IMR-90 (cell line): ENCODE measurements at regions of chr3 and their contacts with region 1.

Region 1: GRCh38 chr3:190205739-190206138 is 85.0 kb upstream of the P3H2 start:
- DNase-seq: peak; percentile 92
- ATAC-seq: peak; percentile 86
- H3K4me3 ChIP-seq: no peak overlapping the region
- H3K27ac ChIP-seq: no peak overlapping the region
- H3K4me1 ChIP-seq: no peaks in the 10 kb centered on the region
- H3K27me3 ChIP-seq: no peaks in the 10 kb centered on the region
- CTCF ChIP-seq: no peak
- POLR2A ChIP-seq: no peak
- RAD21 ChIP-seq: 0 out of 2 replicates have a peak, but pooled peaks have one; percentile 23

Region 2: DNA sequence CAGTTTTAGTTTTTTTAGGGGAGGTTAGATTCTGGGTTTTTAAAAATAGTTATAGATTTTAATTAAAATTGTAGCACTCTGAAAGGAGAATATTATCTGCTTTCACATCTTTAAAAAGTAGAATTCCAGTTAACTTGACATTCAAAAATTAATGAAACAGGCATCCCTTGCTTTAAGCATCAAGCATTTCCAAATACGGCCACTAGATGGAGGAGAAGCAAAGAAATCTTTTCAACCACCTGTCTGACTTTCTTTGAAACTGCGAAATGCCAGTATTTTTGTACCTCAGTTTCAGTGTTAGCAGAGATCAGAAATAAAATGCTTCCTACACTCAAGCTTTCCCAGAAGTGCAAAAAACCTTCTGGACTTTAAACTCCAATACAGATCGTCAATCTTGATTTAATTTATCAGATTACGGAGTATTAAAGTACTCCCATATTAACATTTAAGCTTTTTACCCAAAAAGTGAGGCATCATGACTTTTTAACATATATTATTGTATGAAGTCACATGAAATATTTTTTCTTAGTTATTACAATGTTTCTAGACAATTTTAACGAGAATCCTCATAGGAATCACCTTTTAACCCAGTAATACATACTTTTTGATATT is 238.4 kb before region 1 on chr3:
- CTCF ChIA-PET with region 1: interaction called, 5 read pairs
- POLR2A ChIA-PET with region 1: no interaction called
- dilution Hi-C with region 1: no loop called
- in situ Hi-C with region 1: no loop called
- intact Hi-C with region 1: loop called (anchors 1 kb)
- DNase-seq: peak; percentile 65
- ATAC-seq: peak; percentile 54; the same call in 1 of the 2 replicates
- H3K4me3 ChIP-seq: no peak overlapping the region
- H3K27ac ChIP-seq: no peak overlapping the region
- H3K4me1 ChIP-seq: no peaks in the 10 kb centered on the region
- H3K27me3 ChIP-seq: no peaks in the 10 kb centered on the region
- CTCF ChIP-seq: peak; percentile 89
- POLR2A ChIP-seq: no peak
- RAD21 ChIP-seq: peak; percentile 87

Region 3: GRCh38 chr3:190017521-190018288 is 188.0 kb before region 1 on chr3:
- CTCF ChIA-PET with region 1: no interaction called
- POLR2A ChIA-PET with region 1: no interaction called
- dilution Hi-C with region 1: no loop called
- in situ Hi-C with region 1: loop called (anchors 10 kb)
- intact Hi-C with region 1: loop called (anchors 1 kb)
- DNase-seq: peak; percentile 84
- ATAC-seq: peak; percentile 78
- H3K4me3 ChIP-seq: no peak overlapping the region
- H3K27ac ChIP-seq: no peak overlapping the region
- H3K4me1 ChIP-seq: peaks cover 15% of the 10 kb centered on the region; the same call in 1 of the 2 replicates
- H3K27me3 ChIP-seq: no peaks in the 10 kb centered on the region
- CTCF ChIP-seq: peak; percentile 67
- POLR2A ChIP-seq: no peak
- RAD21 ChIP-seq: peak; percentile 79

Region 4: DNA sequence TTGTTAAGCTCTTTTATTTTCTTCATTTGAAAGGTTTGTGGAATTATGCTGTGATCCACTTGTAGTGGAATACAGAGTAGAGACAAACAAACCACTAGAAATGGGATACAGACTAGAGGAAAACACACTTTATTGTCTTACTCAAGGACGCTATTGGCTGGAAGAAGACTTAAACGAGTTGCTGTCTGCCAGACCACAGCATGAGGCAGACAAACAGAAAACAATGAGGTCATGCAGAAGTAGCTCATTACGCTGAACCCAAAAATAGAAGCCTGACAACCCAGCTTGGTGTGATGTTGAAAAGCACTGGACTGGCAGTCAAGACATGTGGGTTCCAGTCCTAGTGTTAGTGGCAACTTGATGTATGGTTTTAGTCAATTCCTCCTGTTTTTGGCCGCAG is 22.6 kb before region 1 on chr3:
- CTCF ChIA-PET with region 1: no interaction called
- POLR2A ChIA-PET with region 1: interaction called, 17 read pairs
- dilution Hi-C with region 1: no loop called
- in situ Hi-C with region 1: no loop called
- intact Hi-C with region 1: no loop called
- DNase-seq: peak; percentile 98
- ATAC-seq: peak; percentile 64
- H3K4me3 ChIP-seq: no peak overlapping the region
- H3K27ac ChIP-seq: peak overlapping the region; percentile 33
- H3K4me1 ChIP-seq: peaks cover 6% of the 10 kb centered on the region; the same call in 1 of the 2 replicates
- H3K27me3 ChIP-seq: no peaks in the 10 kb centered on the region
- CTCF ChIP-seq: no peak
- POLR2A ChIP-seq: no peak; the same call in none of the 2 replicates
- RAD21 ChIP-seq: peak; percentile 2; the same call in 1 of the 2 replicates

Region 5: DNA sequence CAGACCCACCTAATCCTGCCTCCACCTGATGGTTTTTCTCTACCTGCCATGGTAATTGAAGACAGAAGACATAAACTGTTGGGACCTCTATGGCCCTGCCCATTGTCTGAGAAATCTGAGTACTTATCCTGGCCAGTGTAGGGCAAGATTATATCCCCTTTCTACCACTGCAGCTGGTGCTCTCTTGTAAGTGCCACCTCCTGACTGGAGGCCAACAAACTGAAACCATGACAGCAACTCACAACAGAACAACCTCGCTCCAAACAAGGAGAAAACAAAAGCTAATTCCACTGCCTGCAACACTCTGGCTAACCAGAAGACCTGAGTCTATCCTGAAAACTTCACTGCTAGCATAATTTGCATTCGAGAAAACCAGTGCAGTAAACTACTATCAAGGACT is 33.6 kb after region 1 on chr3:
- CTCF ChIA-PET with region 1: no interaction called
- POLR2A ChIA-PET with region 1: no interaction called
- dilution Hi-C with region 1: no loop called
- in situ Hi-C with region 1: no loop called
- intact Hi-C with region 1: no loop called
- DNase-seq: no peak
- ATAC-seq: no peak
- H3K4me3 ChIP-seq: no peak overlapping the region
- H3K27ac ChIP-seq: no peak overlapping the region
- H3K4me1 ChIP-seq: no peaks in the 10 kb centered on the region
- H3K27me3 ChIP-seq: no peaks in the 10 kb centered on the region
- CTCF ChIP-seq: no peak
- POLR2A ChIP-seq: no peak
- RAD21 ChIP-seq: no peak

Region 6: GRCh38 chr3:190249414-190249813 is 43.7 kb after region 1 on chr3:
- CTCF ChIA-PET with region 1: no interaction called
- POLR2A ChIA-PET with region 1: no interaction called
- dilution Hi-C with region 1: no loop called
- in situ Hi-C with region 1: no loop called
- intact Hi-C with region 1: no loop called
- DNase-seq: no peak
- ATAC-seq: no peak
- H3K4me3 ChIP-seq: no peak overlapping the region
- H3K27ac ChIP-seq: no peak overlapping the region
- H3K4me1 ChIP-seq: peaks cover 3% of the 10 kb centered on the region; the same call in 1 of the 2 replicates
- H3K27me3 ChIP-seq: no peaks in the 10 kb centered on the region
- CTCF ChIP-seq: no peak
- POLR2A ChIP-seq: no peak
- RAD21 ChIP-seq: no peak

Region 7: GRCh38 chr3:190384241-190384863 is 178.6 kb after region 1 on chr3:
- CTCF ChIA-PET with region 1: interaction called, 3 read pairs
- POLR2A ChIA-PET with region 1: no interaction called
- dilution Hi-C with region 1: no loop called
- in situ Hi-C with region 1: no loop called
- intact Hi-C with region 1: loop called (anchors 5 kb)
- DNase-seq: peak; percentile 69
- ATAC-seq: peak; percentile 21; the same call in 1 of the 2 replicates
- H3K4me3 ChIP-seq: no peak overlapping the region
- H3K27ac ChIP-seq: no peak overlapping the region
- H3K4me1 ChIP-seq: peaks cover 5% of the 10 kb centered on the region
- H3K27me3 ChIP-seq: no peaks in the 10 kb centered on the region
- CTCF ChIP-seq: peak; percentile 62
- POLR2A ChIP-seq: no peak
- RAD21 ChIP-seq: peak; percentile 62